ENCODE measurements at regions of chr12 and their contacts with region 1.

Region 1: GRCh38 chr12:48977315-48978281 is 524 bp upstream of the WNT1 start:
- DNase-seq: peak; percentile 76 to 88 (median 78)
- ATAC-seq: peak; percentile 52 to 59
- H3K4me3 Mint-ChIP-seq: peak overlapping the region; percentile 33 to 82 (median 64)
- H3K27ac Mint-ChIP-seq: peak overlapping the region; percentile 22 to 95 (median 69)
- H3K4me1 Mint-ChIP-seq: peaks cover 32 to 53% (median 50%) of the 10 kb centered on the region in 4 donors
- H3K27me3 Mint-ChIP-seq: peaks cover 7 to 39% (median 30%) of the 10 kb centered on the region in 5 donors

Region 2: DNA sequence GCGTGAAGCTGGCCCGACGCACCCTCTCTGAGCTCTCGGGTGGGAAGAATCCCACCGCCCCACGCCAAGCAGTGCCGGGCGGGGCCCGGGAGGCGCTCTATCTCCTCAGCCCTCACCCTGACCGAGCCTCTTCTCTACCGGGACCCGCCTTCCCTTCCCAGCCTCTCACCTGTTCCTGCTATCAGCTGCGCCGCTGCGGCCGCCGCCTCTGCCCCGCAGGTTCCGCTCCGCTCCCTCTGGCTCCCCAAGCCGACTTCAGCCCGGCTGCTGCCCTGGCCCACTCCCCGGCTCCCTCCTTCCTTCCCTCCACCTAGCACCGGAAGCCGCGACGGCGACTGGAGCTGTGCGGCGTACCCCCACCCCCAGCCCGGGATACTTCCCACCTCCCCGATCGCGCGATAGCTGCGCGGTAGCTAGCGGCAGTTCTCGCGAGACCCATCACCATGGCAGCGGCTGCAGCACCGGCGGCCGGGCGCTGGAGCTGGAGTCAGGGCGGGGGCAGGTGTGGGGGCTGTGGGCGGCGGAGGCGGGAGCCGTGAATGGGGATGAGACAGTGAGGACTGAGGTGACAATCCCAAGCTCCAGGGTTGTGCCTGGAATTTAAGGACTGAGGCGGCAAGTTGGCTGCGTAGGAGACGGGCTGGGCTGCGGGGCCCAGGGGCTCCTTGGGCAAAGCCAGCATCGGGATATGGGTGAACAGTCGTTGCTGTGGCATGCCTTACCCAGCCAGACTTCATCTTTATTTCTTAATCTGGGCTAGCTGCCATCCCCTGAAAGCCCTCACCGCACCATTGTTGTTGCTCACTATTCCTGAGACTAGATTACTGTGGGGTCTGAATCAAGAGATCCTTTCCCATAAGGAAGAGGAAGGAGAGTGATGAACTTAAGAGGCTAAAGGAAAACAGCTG is 20.2 kb before region 1 on chr12 and contains the start of gene ARF3:
- POLR2A ChIA-PET with region 1: interaction called, 18 read pairs
- DNase-seq: peak; percentile 88 to 96 (median 92)
- ATAC-seq: peak; percentile 94
- H3K4me3 Mint-ChIP-seq: peak within 1 kb of the TSS; percentile 91 to 99 (median 98)
- H3K27ac Mint-ChIP-seq: peak within 1 kb of the TSS; percentile 86 to 97 (median 95)
- H3K4me1 Mint-ChIP-seq: peaks cover 26 to 54% (median 46%) of the 10 kb centered on the region in 4 donors
- H3K27me3 Mint-ChIP-seq: peaks cover 0 to 2% (median 0%) of the 10 kb centered on the region in 5 donors
- polyA plus RNA-seq, gene ARF3: 19.5 to 24.4 (median 21.8) TPM

Region 3: GRCh38 chr12:48995061-48995879 is 17.7 kb after region 1 on chr12:
- POLR2A ChIA-PET with region 1: interaction called, 47 read pairs
- DNase-seq: peak in 5 of 10 donors; percentile 38 to 70 (median 50)
- ATAC-seq: peak in 1 of 2 donors; percentile 22
- H3K4me3 Mint-ChIP-seq: peak overlapping the region in 9 of 10 donors; percentile 48 to 85 (median 69)
- H3K27ac Mint-ChIP-seq: peak overlapping the region in 4 of 10 donors; percentile 3 to 92 (median 78)
- H3K4me1 Mint-ChIP-seq: peaks cover 18 to 47% (median 35%) of the 10 kb centered on the region in 4 donors
- H3K27me3 Mint-ChIP-seq: peaks cover 34 to 76% (median 51%) of the 10 kb centered on the region in 5 donors

Region 4: DNA sequence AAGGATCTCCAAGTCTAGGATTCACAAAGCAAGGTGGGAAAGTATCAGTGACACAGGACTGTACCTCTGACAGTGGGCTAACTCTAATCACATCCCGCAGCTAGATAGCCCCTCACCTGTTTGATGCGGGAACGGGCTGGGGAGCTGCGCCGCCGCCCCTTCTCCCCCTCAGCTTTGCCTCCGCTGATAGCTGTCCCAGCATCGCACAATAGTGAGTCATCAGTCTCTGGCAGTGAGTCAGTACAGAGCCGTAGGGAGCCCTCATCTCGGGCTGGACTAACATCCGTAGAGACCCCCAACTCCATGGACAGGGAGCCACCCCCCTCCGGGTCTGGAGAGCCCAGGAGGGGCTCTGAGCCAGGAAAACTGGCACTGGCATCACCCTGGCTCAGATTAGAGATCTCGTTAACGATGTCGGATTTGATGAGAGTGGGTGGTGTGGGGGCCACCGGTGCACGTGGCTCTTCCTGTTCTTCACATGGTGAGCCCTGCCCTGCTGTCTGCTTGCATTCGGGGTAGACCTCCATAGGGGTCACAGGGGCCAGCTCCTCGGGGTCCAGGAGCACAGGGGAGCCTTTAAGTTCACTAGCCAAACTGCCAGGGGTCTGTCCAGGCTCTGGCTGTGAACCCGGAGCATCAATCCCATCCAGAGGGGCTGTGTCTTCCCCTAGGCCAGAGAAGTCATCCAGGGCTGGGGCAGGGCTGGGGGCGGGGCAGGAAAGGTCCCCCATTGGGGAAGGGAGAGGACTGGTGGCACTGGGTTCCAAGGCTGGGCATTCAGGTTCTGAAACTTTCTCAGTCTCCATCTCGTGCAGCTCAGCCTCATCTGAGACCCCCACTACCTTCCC is 72.2 kb after region 1 on chr12:
- POLR2A ChIA-PET with region 1: no interaction called
- DNase-seq: no peak
- ATAC-seq: no peak
- H3K4me3 Mint-ChIP-seq: no peak overlapping the region
- H3K27ac Mint-ChIP-seq: peak overlapping the region in 1 of 10 donors; percentile 71
- H3K4me1 Mint-ChIP-seq: peaks cover 11 to 26% (median 19%) of the 10 kb centered on the region in 4 donors
- H3K27me3 Mint-ChIP-seq: no peaks in the 10 kb centered on the region

Region 5: GRCh38 chr12:49212572-49212971 is 235.0 kb after region 1 on chr12:
- POLR2A ChIA-PET with region 1: no interaction called
- DNase-seq: no peak
- ATAC-seq: no peak
- H3K4me3 Mint-ChIP-seq: no peak overlapping the region
- H3K27ac Mint-ChIP-seq: no peak overlapping the region
- H3K4me1 Mint-ChIP-seq: no peaks in the 10 kb centered on the region
- H3K27me3 Mint-ChIP-seq: peaks cover 0 to 2% (median 0%) of the 10 kb centered on the region in 5 donors

Measured in naive thymus-derived CD8-positive, alpha-beta T cell (primary cell).